ENCODE measurements at regions of chr1 and their contacts with region 1.

Region 1: DNA sequence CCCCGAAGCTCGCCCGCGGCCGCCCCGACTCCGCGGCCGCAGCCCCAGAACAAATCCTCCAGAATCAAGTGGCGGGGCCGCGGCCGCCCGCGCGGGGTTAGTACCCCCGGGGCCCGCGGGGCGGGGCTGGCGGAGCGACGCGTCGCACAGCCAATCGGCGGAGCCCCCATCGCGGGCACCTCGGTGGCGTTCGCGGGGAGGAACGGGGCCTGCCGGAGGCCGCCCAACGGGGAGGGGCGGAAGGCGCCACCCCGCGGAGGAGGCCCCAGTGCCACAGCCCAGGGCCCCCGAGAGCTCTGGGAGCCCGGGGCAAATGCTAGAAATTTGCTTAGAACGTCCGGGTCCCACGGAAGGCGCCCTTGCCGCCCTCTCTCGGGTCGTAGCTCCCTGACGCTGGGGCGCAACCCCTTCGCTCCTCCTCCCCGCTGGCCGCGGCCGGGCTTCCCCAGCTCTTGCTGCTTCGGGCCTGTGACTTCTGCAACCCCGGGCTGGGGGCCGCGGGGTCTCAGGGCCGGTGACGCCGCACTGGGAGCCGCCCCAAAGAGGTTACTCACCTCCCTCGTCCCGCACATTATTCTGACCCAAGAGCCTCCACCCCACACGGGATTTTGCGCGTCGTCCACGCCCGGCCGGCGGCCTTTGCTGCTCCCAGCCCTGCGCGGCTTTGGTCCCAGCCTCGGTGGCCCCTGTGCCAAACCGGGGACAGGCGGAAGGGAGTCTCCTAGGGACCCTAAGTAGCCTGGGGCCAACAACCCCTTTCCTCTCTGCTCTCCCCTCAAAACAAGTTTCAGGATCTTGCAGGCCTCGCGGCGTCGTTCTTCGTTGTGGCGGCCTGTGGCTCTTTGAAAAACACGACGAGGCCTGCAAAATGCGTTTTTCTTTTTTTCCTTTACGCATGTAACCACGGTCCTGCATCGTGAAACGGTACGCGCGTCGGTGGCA is at the start of gene RUNX3:
- DNase-seq: peak; percentile 87 to 98 (median 94)
- ATAC-seq: peak; percentile 77
- H3K4me3 ChIP-seq: peak within 1 kb of the TSS; percentile 89 to 97
- H3K4me3 Mint-ChIP-seq: peak within 1 kb of the TSS; percentile 93
- H3K27ac ChIP-seq: peak within 1 kb of the TSS; percentile 95 to 96
- H3K27ac Mint-ChIP-seq: peak within 1 kb of the TSS; percentile 99
- H3K4me1 ChIP-seq: peaks cover 49% of the 10 kb centered on the region
- H3K4me1 Mint-ChIP-seq: peaks cover 50% of the 10 kb centered on the region
- H3K27me3 ChIP-seq: no peaks in the 10 kb centered on the region
- H3K27me3 Mint-ChIP-seq: no peaks in the 10 kb centered on the region
- CTCF ChIP-seq: no peak
- total RNA-seq, gene RUNX3: 423 to 424 TPM

Region 2: GRCh38 chr1:24847995-24848881 is 82.2 kb before region 1 on chr1:
- CTCF ChIA-PET with region 1: interaction called, 36 read pairs
- POLR2A ChIA-PET with region 1: interaction called, 12 read pairs
- intact Hi-C with region 1: loop called (anchors 1 kb)
- DNase-seq: peak; percentile 82 to 96 (median 91)
- ATAC-seq: peak; percentile 92
- H3K4me3 ChIP-seq: peak overlapping the region; percentile 44 to 58
- H3K4me3 Mint-ChIP-seq: peak overlapping the region; percentile 63
- H3K27ac ChIP-seq: peak overlapping the region; percentile 11 to 63
- H3K27ac Mint-ChIP-seq: peak overlapping the region; percentile 79
- H3K4me1 ChIP-seq: peaks cover 19% of the 10 kb centered on the region
- H3K4me1 Mint-ChIP-seq: peaks cover 16% of the 10 kb centered on the region
- H3K27me3 ChIP-seq: no peaks in the 10 kb centered on the region
- H3K27me3 Mint-ChIP-seq: no peaks in the 10 kb centered on the region
- CTCF ChIP-seq: peak; percentile 84

Region 3: DNA sequence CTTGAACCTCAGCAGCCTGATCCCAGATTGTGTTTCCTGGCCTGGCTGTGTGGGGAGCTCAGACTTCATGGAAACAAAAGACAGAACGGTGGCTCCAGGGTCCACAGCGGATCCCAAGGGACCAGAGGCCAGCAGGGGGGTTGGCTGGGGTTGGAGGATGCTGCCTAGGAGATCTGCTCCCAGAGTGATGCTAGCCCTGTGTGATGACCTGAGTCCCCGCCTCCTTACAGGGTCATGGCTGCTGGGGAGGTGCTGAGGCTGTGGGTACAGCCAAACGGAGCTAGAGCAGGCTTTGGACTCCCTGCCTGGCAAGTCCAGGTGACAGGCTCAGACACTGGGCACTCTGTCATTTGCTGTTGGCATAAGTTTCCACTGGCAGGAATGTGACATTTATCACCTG is 11.1 kb after region 1 on chr1:
- CTCF ChIA-PET with region 1: interaction called, 16 read pairs
- POLR2A ChIA-PET with region 1: interaction called, 10 read pairs
- intact Hi-C with region 1: no loop called
- DNase-seq: no peak
- ATAC-seq: peak; percentile 16
- H3K4me3 ChIP-seq: no peak overlapping the region
- H3K4me3 Mint-ChIP-seq: no peak overlapping the region
- H3K27ac ChIP-seq: no peak overlapping the region
- H3K27ac Mint-ChIP-seq: peak overlapping the region; percentile 64
- H3K4me1 ChIP-seq: no peaks in the 10 kb centered on the region
- H3K4me1 Mint-ChIP-seq: peaks cover 39% of the 10 kb centered on the region
- H3K27me3 ChIP-seq: no peaks in the 10 kb centered on the region
- H3K27me3 Mint-ChIP-seq: no peaks in the 10 kb centered on the region
- CTCF ChIP-seq: no peak

Region 4: GRCh38 chr1:24964811-24965570 is 34.5 kb after region 1 on chr1:
- CTCF ChIA-PET with region 1: interaction called, 111 read pairs
- POLR2A ChIA-PET with region 1: interaction called, 23 read pairs
- intact Hi-C with region 1: loop called (anchors 1 kb)
- DNase-seq: peak; percentile 77 to 98 (median 87)
- ATAC-seq: peak; percentile 78
- H3K4me3 ChIP-seq: peak overlapping the region; percentile 60 to 64
- H3K4me3 Mint-ChIP-seq: peak overlapping the region; percentile 90
- H3K27ac ChIP-seq: peak overlapping the region; percentile 67 to 79
- H3K27ac Mint-ChIP-seq: peak overlapping the region; percentile 99
- H3K4me1 ChIP-seq: peaks cover 84% of the 10 kb centered on the region
- H3K4me1 Mint-ChIP-seq: peaks cover 78% of the 10 kb centered on the region
- H3K27me3 ChIP-seq: no peaks in the 10 kb centered on the region
- H3K27me3 Mint-ChIP-seq: no peaks in the 10 kb centered on the region
- CTCF ChIP-seq: no peak

Region 5: GRCh38 chr1:25022361-25023189 is 92.1 kb after region 1 on chr1:
- CTCF ChIA-PET with region 1: interaction called, 11 read pairs
- POLR2A ChIA-PET with region 1: interaction called, 35 read pairs
- intact Hi-C with region 1: loop called (anchors 1 kb)
- DNase-seq: peak; percentile 91 to 100 (median 95)
- ATAC-seq: peak; percentile 83
- H3K4me3 ChIP-seq: peak overlapping the region; percentile 43 to 45
- H3K4me3 Mint-ChIP-seq: peak overlapping the region; percentile 58
- H3K27ac ChIP-seq: peak overlapping the region; percentile 83 to 100
- H3K27ac Mint-ChIP-seq: peak overlapping the region; percentile 93
- H3K4me1 ChIP-seq: peaks cover 90% of the 10 kb centered on the region
- H3K4me1 Mint-ChIP-seq: peaks cover 88% of the 10 kb centered on the region
- H3K27me3 ChIP-seq: no peaks in the 10 kb centered on the region
- H3K27me3 Mint-ChIP-seq: no peaks in the 10 kb centered on the region
- CTCF ChIP-seq: no peak

Region 6: DNA sequence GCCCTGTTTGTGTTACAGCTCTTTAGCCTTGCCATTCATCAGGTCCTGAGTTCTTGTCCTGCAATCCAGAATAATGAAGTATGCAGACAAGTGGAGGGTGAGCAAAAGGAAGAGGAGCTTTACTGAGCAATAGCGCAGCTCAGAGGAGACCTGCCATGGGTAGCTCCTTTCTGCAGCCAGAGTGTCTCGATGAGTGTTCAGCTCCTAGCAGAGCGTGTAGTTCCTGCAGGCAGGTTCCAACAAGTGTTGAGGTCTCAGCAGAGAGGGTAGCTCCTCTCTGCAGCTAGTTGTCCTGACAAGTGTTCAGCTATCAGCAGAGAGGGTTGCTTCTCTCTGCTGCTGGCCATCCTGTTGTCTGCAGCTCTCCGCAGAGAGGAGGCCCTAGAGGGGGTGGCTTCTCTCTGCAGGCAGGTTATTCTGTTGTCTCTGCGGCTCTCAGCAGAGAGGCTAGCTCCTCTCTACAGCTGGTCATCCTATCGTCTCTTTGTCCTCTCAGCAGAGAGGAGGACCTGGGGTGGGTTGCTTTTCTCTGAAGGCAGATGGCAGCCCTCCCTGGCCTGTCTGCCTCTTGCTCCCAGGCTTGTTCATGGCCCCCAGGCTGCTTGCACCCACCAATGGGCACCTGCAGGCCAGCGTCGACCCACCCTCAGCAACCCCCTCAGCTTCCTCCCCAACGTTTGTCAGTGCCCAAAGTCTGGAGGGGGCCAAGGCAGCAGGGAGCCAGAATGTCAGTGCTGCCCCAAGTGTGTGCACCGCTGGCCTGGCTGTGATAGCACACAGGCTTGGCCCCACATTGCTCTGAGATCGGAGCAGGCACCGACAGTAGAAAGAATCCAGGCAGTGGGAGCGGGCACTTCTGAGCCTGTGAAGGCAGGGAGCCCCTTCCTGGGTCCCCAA is 112.1 kb after region 1 on chr1:
- CTCF ChIA-PET with region 1: interaction called, 67 read pairs
- POLR2A ChIA-PET with region 1: interaction called, 16 read pairs
- intact Hi-C with region 1: loop called (anchors 1 kb)
- DNase-seq: peak in 1 of 9 experiments; percentile 36
- ATAC-seq: peak; percentile 29
- H3K4me3 ChIP-seq: no peak overlapping the region
- H3K4me3 Mint-ChIP-seq: no peak overlapping the region
- H3K27ac ChIP-seq: no peak overlapping the region
- H3K27ac Mint-ChIP-seq: peak overlapping the region; percentile 10
- H3K4me1 ChIP-seq: peaks cover 21% of the 10 kb centered on the region
- H3K4me1 Mint-ChIP-seq: peaks cover 28% of the 10 kb centered on the region
- H3K27me3 ChIP-seq: no peaks in the 10 kb centered on the region
- H3K27me3 Mint-ChIP-seq: no peaks in the 10 kb centered on the region
- CTCF ChIP-seq: no peak

Region 7: DNA sequence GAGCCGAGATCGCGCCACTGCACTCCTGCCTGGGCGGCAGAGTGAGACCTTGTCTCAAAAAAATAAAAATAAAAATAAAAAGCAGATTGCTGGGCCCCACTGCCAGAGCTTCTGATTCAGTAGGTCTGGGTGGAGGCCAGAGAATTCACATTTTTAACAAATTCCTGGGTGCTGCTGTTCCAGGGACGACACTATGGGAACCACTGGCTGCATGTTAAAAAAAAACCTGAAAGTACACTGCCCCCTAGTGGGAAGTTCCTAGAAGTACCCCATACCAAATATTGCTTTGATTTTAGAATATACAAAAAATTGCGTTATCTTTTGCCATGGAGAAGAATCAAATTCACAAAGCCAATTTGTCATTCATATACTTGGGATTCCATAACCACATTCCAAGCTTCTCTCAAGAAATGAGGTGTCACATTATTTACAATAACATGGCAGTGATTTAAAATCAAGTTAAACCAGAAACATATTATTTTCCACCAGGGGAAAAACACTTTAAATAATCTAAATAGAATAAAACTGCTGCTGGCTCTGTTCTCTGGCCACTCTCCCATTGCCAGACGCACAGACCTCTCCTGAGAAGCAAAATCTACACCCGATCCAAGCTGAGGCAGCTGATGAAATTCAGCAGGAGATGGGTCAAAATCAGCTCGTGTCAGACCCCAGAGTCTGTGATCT is 274.5 kb after region 1 on chr1:
- CTCF ChIA-PET with region 1: interaction called, 6 read pairs
- POLR2A ChIA-PET with region 1: no interaction called
- intact Hi-C with region 1: loop called (anchors 1 to 10 kb)
- DNase-seq: peak in 5 of 9 experiments; percentile 13 to 73 (median 50)
- ATAC-seq: peak; percentile 70
- H3K4me3 ChIP-seq: no peak overlapping the region
- H3K4me3 Mint-ChIP-seq: no peak overlapping the region
- H3K27ac ChIP-seq: no peak overlapping the region
- H3K27ac Mint-ChIP-seq: no peak overlapping the region
- H3K4me1 ChIP-seq: no peaks in the 10 kb centered on the region
- H3K4me1 Mint-ChIP-seq: peaks cover 2% of the 10 kb centered on the region
- H3K27me3 ChIP-seq: no peaks in the 10 kb centered on the region
- H3K27me3 Mint-ChIP-seq: peaks cover 10% of the 10 kb centered on the region
- CTCF ChIP-seq: peak; percentile 85

Measured in CD8-positive, alpha-beta T cell (primary cell).